ENCODE measurements at regions of chr9 and their contacts with region 1.

Region 1: DNA sequence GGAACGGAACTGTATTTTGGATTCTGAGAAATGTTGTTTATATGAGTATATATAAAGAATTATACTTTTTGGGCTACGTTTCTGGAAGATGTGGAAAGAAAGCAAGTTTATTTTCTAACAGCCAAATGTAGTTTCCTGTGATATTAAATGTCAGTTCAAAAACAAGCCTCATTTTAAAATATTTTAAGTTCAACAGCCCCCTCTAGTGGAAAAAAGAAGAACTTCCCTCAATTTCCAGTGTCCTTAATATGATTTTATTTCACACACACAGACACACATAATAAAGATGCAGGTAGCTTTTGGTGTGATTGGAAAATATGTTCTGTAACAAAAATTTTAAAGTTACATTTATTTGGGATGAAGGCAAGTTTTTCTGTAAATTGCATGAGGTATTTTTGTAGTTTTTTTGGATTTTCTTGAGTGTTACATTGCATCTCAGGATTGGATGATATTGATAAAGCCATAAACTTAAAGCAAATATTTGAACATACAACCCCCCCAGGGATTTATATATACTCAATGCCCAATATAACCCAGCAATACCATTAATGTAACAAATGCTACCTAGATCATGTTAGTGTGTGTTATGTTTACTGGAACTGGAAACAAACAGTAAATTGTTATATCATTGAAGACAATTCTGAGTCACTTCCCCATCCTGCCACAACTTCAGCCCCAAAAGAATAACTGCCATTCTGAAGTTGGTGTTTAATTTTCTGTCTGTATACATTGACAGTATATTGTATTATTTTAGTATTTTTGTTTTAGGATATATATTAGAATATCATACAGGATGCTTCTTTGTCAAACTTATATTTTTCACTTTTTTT is 54.0 kb downstream of the CCDC171 start:
- DNase-seq: no peak
- ATAC-seq: no peak
- H3K4me3 Mint-ChIP-seq: no peak overlapping the region
- H3K27ac Mint-ChIP-seq: no peak overlapping the region
- H3K4me1 Mint-ChIP-seq: no peaks in the 10 kb centered on the region
- H3K27me3 Mint-ChIP-seq: no peaks in the 10 kb centered on the region

Region 2: DNA sequence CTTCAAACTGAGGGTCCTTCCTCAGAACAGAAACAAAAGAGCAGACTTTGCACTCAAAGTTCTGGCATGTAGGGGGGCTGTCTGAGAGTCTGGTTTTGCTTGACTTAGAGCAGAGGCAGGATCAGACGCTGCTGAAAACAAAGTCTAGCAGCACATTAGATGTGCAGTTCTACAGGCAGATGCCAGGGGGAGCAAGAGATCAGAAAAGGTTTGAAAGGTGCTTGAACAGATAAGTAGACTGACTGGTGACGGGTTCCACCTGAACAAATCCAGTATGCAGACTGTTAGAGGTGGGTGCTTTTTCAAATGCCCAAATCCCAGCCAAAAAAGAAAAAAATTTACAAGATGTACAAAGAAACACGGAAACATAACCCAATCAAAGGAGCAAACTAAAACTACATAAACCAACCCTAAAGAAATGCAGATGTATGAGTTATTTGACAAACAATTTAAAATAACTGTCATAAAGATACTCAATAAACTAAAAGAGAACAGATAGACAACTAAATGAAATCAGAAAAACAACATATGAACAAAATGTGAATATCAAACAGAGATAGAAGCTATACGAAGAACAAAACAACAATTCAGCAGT is 501.9 kb before region 1 on chr9:
- CTCF ChIA-PET with region 1: interaction called, 4 read pairs
- POLR2A ChIA-PET with region 1: no interaction called
- intact Hi-C with region 1: loop called (anchors 2 to 10 kb)
- DNase-seq: peak; percentile 60
- ATAC-seq: peak; percentile 88
- H3K4me3 Mint-ChIP-seq: no peak overlapping the region
- H3K27ac Mint-ChIP-seq: no peak overlapping the region
- H3K4me1 Mint-ChIP-seq: no peaks in the 10 kb centered on the region
- H3K27me3 Mint-ChIP-seq: peaks cover 6% of the 10 kb centered on the region

Region 3: DNA sequence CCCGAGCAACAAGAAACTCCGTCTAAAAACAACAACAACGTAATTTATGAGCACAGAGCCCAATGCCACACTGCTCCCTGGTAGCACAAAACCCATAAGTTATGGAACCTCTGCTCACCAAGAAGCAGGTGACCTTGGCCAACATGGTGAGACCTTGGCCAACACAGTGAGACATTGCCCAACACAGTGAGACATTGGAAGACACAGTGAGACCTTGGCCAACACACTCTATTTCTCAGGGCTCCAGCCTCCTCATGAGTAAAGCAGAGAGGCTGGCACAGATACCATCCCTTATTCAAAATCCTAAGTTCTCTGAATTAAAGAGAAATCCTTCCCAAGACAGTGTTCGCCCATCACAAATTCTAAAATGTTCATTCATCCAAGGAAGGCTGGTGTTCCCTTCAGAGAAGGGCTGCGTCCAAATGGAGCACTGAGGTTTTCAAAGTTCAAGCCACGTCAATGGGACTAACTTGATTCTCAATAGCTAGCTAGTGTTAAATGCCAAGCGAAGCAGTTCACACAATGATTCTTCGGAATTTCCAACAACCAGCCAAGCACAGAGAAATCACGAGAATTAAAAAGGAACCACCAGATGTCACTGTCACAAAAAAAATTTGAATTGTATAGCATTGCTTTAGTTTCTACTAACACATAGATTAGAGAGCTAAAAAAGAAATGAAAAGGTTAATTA is 329.3 kb before region 1 on chr9:
- CTCF ChIA-PET with region 1: no interaction called
- POLR2A ChIA-PET with region 1: no interaction called
- intact Hi-C with region 1: loop called (anchors 2 to 5 kb)
- DNase-seq: no peak
- ATAC-seq: peak; percentile 76
- H3K4me3 Mint-ChIP-seq: no peak overlapping the region
- H3K27ac Mint-ChIP-seq: peak overlapping the region; percentile 29
- H3K4me1 Mint-ChIP-seq: peaks cover 33% of the 10 kb centered on the region
- H3K27me3 Mint-ChIP-seq: no peaks in the 10 kb centered on the region

Region 4: GRCh38 chr9:15422372-15423230 is 184.3 kb before region 1 on chr9 and contains the start of gene SNAPC3:
- CTCF ChIA-PET with region 1: interaction called, 4 read pairs
- POLR2A ChIA-PET with region 1: no interaction called
- intact Hi-C with region 1: loop called (anchors 5 kb)
- DNase-seq: peak; percentile 96
- ATAC-seq: peak; percentile 97
- H3K4me3 Mint-ChIP-seq: peak within 1 kb of the TSS; percentile 95
- H3K27ac Mint-ChIP-seq: peak within 1 kb of the TSS; percentile 92
- H3K4me1 Mint-ChIP-seq: peaks cover 32% of the 10 kb centered on the region
- H3K27me3 Mint-ChIP-seq: no peaks in the 10 kb centered on the region
- total RNA-seq, gene SNAPC3: 37.8 to 39.6 TPM

Region 5: GRCh38 chr9:15510789-15511575 is 95.9 kb before region 1 on chr9 and contains the start of gene PSIP1:
- CTCF ChIA-PET with region 1: interaction called, 4 read pairs
- POLR2A ChIA-PET with region 1: no interaction called
- intact Hi-C with region 1: loop called in 1 of 2 experiments (anchors 2 kb)
- DNase-seq: peak; percentile 92
- ATAC-seq: peak; percentile 86
- H3K4me3 Mint-ChIP-seq: peak within 1 kb of the TSS; percentile 85
- H3K27ac Mint-ChIP-seq: peak within 1 kb of the TSS; percentile 98
- H3K4me1 Mint-ChIP-seq: peaks cover 48% of the 10 kb centered on the region
- H3K27me3 Mint-ChIP-seq: no peaks in the 10 kb centered on the region
- total RNA-seq, gene PSIP1: 139 to 189 TPM

Region 6: DNA sequence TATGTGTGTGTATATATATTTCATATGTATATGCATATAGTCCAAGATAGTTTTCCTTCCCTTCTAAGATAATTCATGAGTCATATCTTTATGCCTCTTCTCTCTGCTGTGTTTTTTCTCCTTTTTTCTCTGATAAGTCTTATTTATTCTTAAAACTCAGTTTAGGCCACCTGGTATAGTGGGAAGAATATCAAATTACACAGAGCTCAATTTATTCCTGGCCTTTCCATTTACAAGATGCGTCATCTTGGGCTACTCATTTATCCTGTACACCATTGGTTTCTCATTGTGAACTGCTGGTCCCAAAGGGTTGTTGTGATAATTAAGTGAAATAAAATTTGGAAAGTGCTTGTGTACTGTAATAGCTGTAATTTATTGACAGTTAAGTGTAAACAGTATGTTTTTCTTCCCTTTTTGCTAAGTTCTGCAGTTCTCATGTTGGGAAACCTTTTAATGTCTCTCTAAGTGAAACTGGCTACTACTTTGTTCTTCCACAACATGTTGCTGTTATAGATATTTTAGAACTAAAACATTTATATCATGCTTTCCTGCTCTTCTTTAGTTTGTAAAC is 34.6 kb before region 1 on chr9:
- CTCF ChIA-PET with region 1: interaction called, 10 read pairs
- POLR2A ChIA-PET with region 1: no interaction called
- intact Hi-C with region 1: no loop called
- DNase-seq: no peak
- ATAC-seq: no peak
- H3K4me3 Mint-ChIP-seq: no peak overlapping the region
- H3K27ac Mint-ChIP-seq: no peak overlapping the region
- H3K4me1 Mint-ChIP-seq: no peaks in the 10 kb centered on the region
- H3K27me3 Mint-ChIP-seq: no peaks in the 10 kb centered on the region

Region 7: GRCh38 chr9:15882328-15882727 is 275.5 kb after region 1 on chr9:
- CTCF ChIA-PET with region 1: no interaction called
- POLR2A ChIA-PET with region 1: no interaction called
- intact Hi-C with region 1: no loop called
- DNase-seq: no peak
- ATAC-seq: no peak
- H3K4me3 Mint-ChIP-seq: no peak overlapping the region
- H3K27ac Mint-ChIP-seq: no peak overlapping the region
- H3K4me1 Mint-ChIP-seq: no peaks in the 10 kb centered on the region
- H3K27me3 Mint-ChIP-seq: no peaks in the 10 kb centered on the region

Measured in activated CD4-positive, alpha-beta T cell treated with anti-CD3 and anti-CD28 coated beads for 36 hours (primary cell).